ENCODE measurements at regions of chr1 and their contacts with region 1.

Region 1: DNA sequence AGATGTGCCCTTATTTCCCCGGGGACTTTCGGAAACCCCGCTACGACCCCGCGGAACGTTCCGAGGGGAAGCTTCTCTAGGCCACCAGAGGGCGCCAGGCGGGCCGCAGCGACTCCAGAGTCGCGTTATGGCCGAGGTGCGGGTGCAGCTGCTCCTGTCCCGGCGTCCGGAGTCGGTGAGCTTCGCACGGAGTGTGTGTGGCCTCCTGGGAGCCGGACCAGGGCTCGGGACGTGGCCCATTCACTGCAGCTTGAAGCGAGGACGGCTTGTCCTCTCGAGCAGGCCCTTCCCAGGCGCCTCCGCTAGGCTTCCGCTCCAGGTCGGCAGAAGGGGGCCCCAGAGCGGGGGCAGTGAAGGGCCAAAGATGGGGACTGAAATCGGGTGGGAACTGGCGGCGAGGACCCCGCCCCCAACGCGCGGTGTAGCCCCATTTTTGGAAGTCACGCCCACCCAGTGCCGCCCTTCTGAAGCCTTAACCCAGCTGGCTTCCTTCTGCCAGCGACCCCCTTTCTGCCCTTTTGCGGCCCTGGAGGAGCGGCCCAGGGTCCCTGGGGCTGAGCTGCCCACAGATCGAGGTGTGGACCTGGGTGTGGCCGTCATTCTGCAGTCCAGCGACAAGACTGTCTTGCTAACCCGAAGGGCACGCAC is at the start of gene NUDT17:
- DNase-seq: peak; percentile 92
- H3K4me3 Mint-ChIP-seq: no peak within 1 kb of the TSS
- H3K27ac Mint-ChIP-seq: no peak within 1 kb of the TSS
- H3K4me1 Mint-ChIP-seq: peaks cover 9% of the 10 kb centered on the region
- H3K27me3 Mint-ChIP-seq: no peaks in the 10 kb centered on the region
- total RNA-seq, gene NUDT17: 2.5 and 3.4 TPM in 2 replicates

Region 2: GRCh38 chr1:145906954-145907753 is 61.5 kb after region 1 on chr1:
- intact Hi-C with region 1: loop called (anchors 1 kb)
- DNase-seq: no peak
- H3K4me3 Mint-ChIP-seq: no peak overlapping the region
- H3K27ac Mint-ChIP-seq: no peak overlapping the region
- H3K4me1 Mint-ChIP-seq: peaks cover 8% of the 10 kb centered on the region
- H3K27me3 Mint-ChIP-seq: no peaks in the 10 kb centered on the region

Region 3: DNA sequence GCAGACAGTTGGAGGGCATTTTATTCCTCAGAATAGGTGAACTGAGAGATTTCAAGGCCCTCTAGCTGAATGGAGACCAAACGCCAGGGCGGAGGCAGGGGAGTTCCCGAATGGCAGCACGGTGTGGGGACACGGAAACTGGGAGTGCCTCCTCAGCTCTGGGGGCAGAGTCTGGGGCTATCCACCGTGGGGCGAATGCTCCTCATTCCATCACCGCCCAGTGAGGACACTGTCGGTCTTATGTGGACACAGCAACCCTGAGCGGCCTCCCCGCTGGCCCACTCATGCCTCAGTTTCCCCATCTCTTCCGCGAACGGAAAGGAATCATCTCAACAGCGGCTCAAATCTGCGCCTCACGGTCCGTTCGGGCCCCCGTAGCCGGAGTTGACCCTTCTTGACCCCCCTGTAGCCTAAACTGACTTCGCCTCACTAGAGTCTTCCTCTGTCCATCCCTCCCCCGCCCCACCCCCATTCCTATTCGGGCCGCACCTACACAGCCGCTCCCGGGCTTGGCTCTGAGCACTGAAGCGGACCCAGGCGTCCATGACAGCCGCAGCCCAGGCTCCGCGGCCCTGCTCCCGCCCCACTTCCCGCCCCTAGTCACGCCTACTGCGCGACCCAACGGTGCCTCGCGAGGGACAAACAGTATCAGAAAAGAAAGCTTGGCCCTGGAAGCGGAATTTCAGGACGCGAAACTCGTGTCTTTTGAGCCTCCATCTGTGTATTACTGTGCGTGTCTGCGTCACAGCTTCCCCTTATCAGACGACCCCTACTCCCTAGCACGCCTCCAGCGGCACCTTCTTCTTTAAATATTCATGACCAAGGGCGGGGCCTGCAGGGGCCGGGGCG is 72.7 kb after region 1 on chr1 and contains the start of gene PEX11B:
- intact Hi-C with region 1: loop called (anchors 2 kb)
- DNase-seq: peak; percentile 97
- H3K4me3 Mint-ChIP-seq: peak within 1 kb of the TSS; percentile 94
- H3K27ac Mint-ChIP-seq: peak within 1 kb of the TSS; percentile 94
- H3K4me1 Mint-ChIP-seq: peaks cover 36% of the 10 kb centered on the region
- H3K27me3 Mint-ChIP-seq: no peaks in the 10 kb centered on the region
- total RNA-seq, gene PEX11B: 31.7 and 32.2 TPM in 2 replicates

Region 4: GRCh38 chr1:146012737-146013403 is 167.2 kb after region 1 on chr1:
- intact Hi-C with region 1: loop called (anchors 1 kb)
- DNase-seq: peak; percentile 90
- H3K4me3 Mint-ChIP-seq: no peak overlapping the region
- H3K27ac Mint-ChIP-seq: peak overlapping the region; percentile 28
- H3K4me1 Mint-ChIP-seq: peaks cover 12% of the 10 kb centered on the region
- H3K27me3 Mint-ChIP-seq: peaks cover 26% of the 10 kb centered on the region

Measured in activated CD4-positive, alpha-beta T cell treated with anti-CD3 and anti-CD28 coated beads, Interleukin-2, amount 10 ng/mL, durations not matched to agents 24 days and 14 days (primary cell).